CD4-positive, alpha-beta memory T cell (primary cell): ENCODE measurements at regions of chr5 and their contacts with region 1.

Region 1: DNA sequence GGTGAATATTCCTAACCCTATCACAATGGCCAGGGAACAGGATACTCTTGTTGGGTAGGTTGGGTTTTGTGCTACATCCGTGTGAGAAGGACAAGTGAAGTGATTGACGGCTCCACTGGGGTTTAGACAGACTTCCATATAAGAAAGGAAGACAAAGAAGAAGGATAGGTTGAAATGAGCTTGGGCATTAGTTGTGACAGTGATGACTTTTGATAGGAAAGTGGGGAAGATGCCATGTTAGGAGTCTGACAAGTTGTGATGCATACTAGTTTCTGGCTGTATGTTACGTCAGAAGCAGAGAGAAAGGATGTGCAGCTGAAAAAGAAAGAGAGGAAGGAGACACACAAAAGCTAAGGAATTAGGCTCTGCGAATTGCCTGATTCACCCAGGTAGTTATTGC is 138.0 kb downstream of the STARD4 start:
- DNase-seq: no peak
- H3K4me3 ChIP-seq: no peak overlapping the region
- H3K4me3 Mint-ChIP-seq: peak overlapping the region in 1 of 8 donors; percentile 4
- H3K27ac ChIP-seq: no peak overlapping the region
- H3K27ac Mint-ChIP-seq: peak overlapping the region in 1 of 7 donors; percentile 32
- H3K4me1 ChIP-seq: no peaks in the 10 kb centered on the region
- H3K4me1 Mint-ChIP-seq: peaks cover 24 to 64% (median 45%) of the 10 kb centered on the region in 4 donors
- H3K27me3 ChIP-seq: no peaks in the 10 kb centered on the region
- H3K27me3 Mint-ChIP-seq: no peaks in the 10 kb centered on the region

Region 2: GRCh38 chr5:111320953-111321352 is 53.4 kb before region 1 on chr5:
- CTCF ChIA-PET with region 1: no interaction called
- POLR2A ChIA-PET with region 1: no interaction called
- intact Hi-C with region 1: no loop called
- DNase-seq: no peak
- H3K4me3 ChIP-seq: no peak overlapping the region
- H3K4me3 Mint-ChIP-seq: peak overlapping the region in 5 of 8 donors; percentile 0 to 42 (median 20)
- H3K27ac ChIP-seq: no peak overlapping the region
- H3K27ac Mint-ChIP-seq: peak overlapping the region in 6 of 7 donors; percentile 17 to 67 (median 50)
- H3K4me1 ChIP-seq: peaks cover 41% of the 10 kb centered on the region
- H3K4me1 Mint-ChIP-seq: peaks cover 33 to 52% (median 43%) of the 10 kb centered on the region in 4 donors
- H3K27me3 ChIP-seq: no peaks in the 10 kb centered on the region
- H3K27me3 Mint-ChIP-seq: no peaks in the 10 kb centered on the region

Region 3: DNA sequence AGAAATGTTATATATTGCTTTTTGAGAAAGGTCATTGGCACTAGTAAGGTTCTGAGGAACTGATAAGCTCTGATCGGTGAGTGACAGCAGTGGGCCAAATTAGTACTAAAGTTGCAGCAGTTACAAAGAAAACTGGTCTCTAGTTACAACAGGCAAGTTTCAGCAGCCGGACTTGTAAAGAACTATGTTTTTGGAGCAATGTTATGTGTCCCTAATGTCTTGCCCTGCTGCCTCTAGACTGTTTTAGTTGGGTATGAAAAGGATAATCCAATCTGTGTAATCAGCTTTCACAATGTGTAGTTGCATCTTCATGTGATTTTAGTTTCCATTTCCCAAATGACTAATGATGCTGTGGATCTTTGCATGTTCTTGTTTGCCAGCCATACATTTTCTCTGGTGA is 36.7 kb before region 1 on chr5:
- CTCF ChIA-PET with region 1: no interaction called
- POLR2A ChIA-PET with region 1: no interaction called
- intact Hi-C with region 1: loop called (anchors 5 kb)
- DNase-seq: no peak
- H3K4me3 ChIP-seq: no peak overlapping the region
- H3K4me3 Mint-ChIP-seq: peak overlapping the region in 4 of 8 donors; percentile 4 to 66 (median 33)
- H3K27ac ChIP-seq: no peak overlapping the region
- H3K27ac Mint-ChIP-seq: peak overlapping the region in 1 of 7 donors; percentile 55
- H3K4me1 ChIP-seq: peaks cover 47% of the 10 kb centered on the region
- H3K4me1 Mint-ChIP-seq: peaks cover 62 to 84% (median 73%) of the 10 kb centered on the region in 4 donors
- H3K27me3 ChIP-seq: no peaks in the 10 kb centered on the region
- H3K27me3 Mint-ChIP-seq: no peaks in the 10 kb centered on the region

Region 4: DNA sequence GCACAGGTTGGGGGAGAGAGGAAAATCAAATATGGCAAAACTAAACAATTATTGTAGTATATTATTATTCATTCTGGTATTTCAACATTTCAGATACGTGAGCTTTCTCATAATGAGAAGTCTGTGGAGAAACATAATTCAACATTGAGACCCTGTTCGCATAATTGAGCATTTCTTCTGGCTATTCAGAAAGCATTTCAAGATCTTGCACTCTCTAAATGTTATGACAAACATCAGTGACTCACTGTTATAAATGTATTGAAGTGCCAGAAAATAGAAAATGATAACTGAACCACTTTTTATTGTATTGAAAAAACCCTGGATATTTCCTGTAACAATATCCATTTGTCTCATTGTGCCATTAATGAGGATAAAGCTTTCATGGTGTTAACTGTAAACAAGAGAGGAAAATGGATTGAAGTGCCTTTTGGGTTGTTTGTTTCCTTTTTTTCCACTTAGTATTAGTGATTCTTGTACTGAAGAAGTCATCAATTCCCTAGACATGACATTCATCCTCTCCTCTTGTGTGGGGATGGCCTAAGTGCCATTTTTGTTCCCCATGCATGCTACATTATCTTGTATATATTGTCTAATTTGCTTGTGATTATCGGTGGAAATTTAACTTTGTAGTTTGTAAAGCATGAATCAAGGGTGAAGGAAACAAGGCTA is 25.6 kb before region 1 on chr5:
- CTCF ChIA-PET with region 1: no interaction called
- POLR2A ChIA-PET with region 1: no interaction called
- intact Hi-C with region 1: no loop called
- DNase-seq: no peak
- H3K4me3 ChIP-seq: no peak overlapping the region
- H3K4me3 Mint-ChIP-seq: no peak overlapping the region
- H3K27ac ChIP-seq: no peak overlapping the region
- H3K27ac Mint-ChIP-seq: peak overlapping the region in 1 of 7 donors; percentile 45
- H3K4me1 ChIP-seq: no peaks in the 10 kb centered on the region
- H3K4me1 Mint-ChIP-seq: peaks cover 20 to 41% (median 39%) of the 10 kb centered on the region in 4 donors
- H3K27me3 ChIP-seq: no peaks in the 10 kb centered on the region
- H3K27me3 Mint-ChIP-seq: no peaks in the 10 kb centered on the region